HAP-1 (cell line): ENCODE measurements at regions of chr16 and their contacts with region 1.

Region 1: DNA sequence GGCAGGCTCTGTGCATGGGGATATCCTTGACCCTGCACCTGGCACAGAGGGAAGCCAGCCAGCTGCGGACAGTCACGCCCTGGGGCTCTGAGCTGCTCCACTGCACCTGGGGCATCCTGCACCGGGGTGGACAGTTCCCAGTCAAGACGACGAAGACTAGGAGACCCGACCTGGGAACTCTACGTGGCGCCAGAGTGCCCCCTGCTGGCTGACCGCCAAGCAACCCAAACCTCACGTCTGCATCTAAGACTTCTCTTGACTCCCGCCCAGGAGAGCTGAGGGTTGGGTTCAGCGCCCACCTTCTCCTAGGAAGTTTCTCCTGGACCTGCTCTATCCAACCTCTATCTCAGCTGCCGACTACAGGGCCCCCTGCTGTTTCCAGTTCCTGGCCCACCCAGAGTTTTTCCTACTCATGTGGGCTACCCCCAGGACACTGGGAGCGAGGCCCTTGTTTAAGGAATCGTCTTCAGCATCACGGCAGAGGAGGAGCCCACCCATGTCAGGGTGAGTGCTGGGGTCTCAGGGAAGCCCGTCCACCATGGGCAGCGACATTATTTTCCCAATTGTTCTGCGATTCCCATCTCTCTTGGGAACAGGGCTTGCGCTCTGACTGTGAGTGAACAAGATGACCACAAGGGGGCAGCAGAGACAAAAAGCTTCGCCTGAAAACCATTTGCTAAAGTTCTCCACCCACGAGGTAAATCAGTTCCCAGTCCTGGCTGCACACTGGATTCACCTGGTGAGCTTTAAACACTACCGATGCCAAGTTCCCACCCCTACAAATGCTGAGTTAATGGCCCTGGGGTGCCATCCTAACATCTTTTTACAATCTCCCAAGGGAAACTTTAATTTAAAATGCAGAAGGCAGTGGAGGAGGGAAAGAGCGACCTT is 29.3 kb downstream of the TLE7 start:
- DNase-seq: peak; percentile 63 to 85
- H3K4me3 ChIP-seq: no peak overlapping the region
- H3K4me1 ChIP-seq: no peaks in the 10 kb centered on the region
- H3K27me3 ChIP-seq: peaks cover 38% of the 10 kb centered on the region

Region 2: DNA sequence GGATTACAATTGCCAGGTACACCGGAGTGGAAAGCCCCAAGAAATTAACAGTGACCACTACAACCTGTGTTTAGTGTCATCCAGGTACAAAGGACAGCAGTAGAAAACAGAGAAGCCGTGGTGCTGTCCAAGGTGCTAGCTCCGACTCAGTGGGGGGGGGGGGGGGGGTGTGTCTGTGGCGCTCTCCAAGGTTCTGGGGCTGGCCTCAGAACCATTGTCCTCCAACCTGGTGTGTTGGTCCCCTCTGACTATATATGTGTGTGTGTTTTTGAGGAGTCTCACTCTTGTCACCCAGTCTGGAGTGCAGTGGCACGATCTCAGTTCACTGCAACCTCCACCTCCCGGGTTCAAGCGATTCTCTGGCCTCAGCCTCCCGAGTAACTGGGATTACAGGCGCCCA is 55.3 kb after region 1 on chr16:
- in situ Hi-C with region 1: no loop called
- DNase-seq: peak in 1 of 2 experiments; percentile 61
- H3K4me3 ChIP-seq: no peak overlapping the region
- H3K4me1 ChIP-seq: no peaks in the 10 kb centered on the region
- H3K27me3 ChIP-seq: no peaks in the 10 kb centered on the region

Region 3: DNA sequence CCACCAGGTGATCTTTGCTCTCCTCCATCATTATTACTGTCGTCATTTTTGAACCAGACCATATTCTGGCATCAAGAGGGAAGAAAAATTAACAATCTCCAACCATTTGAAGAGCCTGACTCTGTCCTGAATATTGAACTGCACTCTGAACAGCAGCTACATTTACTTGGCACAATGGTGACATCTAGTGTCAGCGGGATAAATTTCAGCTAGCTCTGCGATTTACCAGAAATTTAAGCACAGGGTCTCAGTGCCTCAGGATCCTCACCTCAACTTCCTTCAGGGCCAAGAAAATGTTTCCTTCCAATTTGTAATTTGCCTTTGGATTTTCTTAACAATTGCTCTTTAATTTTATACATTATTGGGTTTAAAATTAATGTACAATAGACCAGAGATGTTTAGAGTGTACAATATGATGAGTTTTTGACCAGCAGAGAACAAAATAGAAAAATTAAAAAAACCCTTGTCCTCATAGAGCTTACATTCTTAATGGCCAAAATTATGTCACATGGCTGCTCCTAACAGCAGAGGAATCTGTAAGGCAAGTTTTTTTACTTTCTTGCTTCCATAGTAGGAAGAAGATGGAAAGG is 87.4 kb after region 1 on chr16:
- in situ Hi-C with region 1: loop called (anchors 5 kb)
- DNase-seq: peak; percentile 46 to 55
- H3K4me3 ChIP-seq: no peak overlapping the region
- H3K4me1 ChIP-seq: no peaks in the 10 kb centered on the region
- H3K27me3 ChIP-seq: no peaks in the 10 kb centered on the region

Region 4: DNA sequence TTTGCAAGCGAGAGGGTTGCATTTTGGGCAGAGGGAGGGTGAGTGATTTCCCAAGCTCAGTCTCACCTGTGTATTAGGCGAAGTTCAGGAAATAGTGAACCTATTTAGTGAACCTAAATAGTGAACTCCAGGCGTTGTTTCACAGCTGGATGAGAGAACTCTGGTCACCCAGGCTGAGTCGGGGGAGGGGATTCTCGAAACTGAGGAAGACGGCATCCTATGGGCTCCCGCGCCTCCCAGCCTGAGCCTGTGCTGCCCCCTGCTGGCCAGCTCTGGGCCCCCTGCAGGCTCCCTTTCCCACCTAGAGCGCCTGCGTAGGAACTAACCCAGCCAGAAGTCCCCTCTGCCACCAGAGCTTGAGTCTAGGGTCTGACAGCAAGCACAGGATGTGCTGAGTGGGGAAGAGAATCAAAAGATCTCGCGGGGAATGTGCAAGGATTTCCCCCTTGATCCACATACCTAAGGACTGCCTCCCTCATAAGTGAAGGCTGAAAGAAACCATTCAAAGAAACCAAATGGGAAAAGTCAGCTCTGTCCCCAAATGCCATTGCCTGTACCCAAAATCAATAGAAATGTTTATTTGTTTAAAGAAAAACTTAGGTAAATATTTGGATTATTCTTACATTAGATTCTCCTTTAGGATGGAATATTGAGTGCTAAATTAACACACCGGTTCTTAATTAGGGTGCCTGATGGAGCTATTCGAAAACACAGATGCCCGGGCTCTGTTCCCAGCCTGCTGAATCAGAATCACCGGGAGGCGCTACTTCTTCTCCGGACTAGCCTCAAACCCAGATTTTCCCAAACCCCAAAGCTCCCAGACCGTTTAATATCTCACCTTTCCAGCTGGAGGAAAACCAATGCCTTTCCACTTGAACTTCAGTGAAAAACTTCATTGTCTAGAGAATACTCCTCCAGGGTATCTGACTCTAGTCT is 198.7 kb after region 1 on chr16:
- in situ Hi-C with region 1: loop called (anchors 25 kb)
- DNase-seq: peak; percentile 62 to 91
- H3K4me3 ChIP-seq: no peak overlapping the region
- H3K4me1 ChIP-seq: peaks cover 5% of the 10 kb centered on the region; the same call in 1 of the 2 replicates
- H3K27me3 ChIP-seq: peaks cover 8% of the 10 kb centered on the region; the same call in 1 of the 2 replicates